Heart left ventricle (tissue), 16 donors: ENCODE measurements at regions of chr2 and their contacts with region 1.

Region 1: DNA sequence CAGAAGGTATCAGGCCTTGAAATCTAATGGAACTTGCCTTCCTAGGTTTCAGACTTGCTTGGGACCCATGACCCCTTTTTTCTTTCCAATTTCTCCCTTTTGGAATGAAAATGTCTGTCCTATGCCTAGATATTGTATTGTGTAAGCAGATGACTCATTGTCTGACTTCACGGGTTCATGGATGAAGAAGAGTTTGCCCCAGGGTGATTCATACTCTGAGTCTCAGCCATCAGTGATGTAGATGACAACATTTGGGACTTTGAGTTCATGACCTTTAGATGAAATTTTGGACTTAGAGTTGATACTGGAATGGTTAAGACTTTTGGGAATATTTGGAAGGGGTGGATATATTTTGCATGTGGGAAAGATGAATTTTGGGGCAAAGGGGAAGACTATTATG is 11.2 kb upstream of the SCYGR5 start:
- DNase-seq: no peak
- ATAC-seq: peak in 3 of 4 donors; percentile 67 to 91 (median 85)
- H3K4me3 ChIP-seq: no peak overlapping the region
- H3K27ac ChIP-seq: peak overlapping the region in 2 of 12 donors; percentile 20 to 49
- H3K4me1 ChIP-seq: peaks cover 0 to 6% (median 0%) of the 10 kb centered on the region in 12 donors
- H3K27me3 ChIP-seq: no peaks in the 10 kb centered on the region
- CTCF ChIP-seq: no peak
- POLR2A ChIP-seq: no peak

Region 2: GRCh38 chr2:227460070-227460485 is 195.4 kb before region 1 on chr2:
- intact Hi-C with region 1: loop called in 2 of 10 experiments (anchors 10 kb)
- DNase-seq: no peak
- ATAC-seq: no peak
- H3K4me3 ChIP-seq: no peak overlapping the region
- H3K27ac ChIP-seq: no peak overlapping the region
- H3K4me1 ChIP-seq: peaks cover 0 to 20% (median 0%) of the 10 kb centered on the region in 12 donors
- H3K27me3 ChIP-seq: no peaks in the 10 kb centered on the region
- CTCF ChIP-seq: no peak
- POLR2A ChIP-seq: no peak

Region 3: DNA sequence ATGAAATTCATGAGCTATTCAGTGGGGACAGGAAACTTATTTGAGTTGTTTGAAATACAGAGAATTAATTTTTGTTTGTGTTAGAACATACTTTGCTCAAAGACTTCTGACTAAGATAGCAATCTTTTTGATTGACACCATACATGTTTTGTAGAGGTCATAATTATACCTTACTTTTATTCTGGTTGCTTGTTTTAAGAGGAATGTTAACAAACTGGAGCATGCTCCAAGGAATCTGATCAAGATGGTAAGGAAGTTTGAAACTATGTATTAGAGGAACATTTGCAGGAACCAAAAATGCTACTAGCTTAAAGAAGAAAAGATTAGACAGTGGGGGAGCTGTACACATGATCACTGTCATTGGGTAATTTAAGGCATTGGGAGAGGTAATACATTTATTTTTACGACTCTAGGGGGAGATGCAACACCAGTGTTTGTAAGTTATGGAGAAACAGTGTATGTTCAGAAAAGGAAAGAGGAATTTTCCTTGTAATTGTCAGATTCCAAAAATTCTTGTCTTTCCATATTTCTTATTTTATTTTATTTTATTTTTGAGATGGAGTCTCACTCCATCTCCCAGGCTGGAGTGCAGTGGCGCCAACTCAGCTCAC is 175.5 kb before region 1 on chr2:
- intact Hi-C with region 1: loop called in 2 of 10 experiments (anchors 5 to 10 kb)
- DNase-seq: no peak
- ATAC-seq: peak in 3 of 4 donors; percentile 46 to 76 (median 53)
- H3K4me3 ChIP-seq: no peak overlapping the region
- H3K27ac ChIP-seq: no peak overlapping the region
- H3K4me1 ChIP-seq: peaks cover 0 to 71% (median 25%) of the 10 kb centered on the region in 12 donors
- H3K27me3 ChIP-seq: no peaks in the 10 kb centered on the region
- CTCF ChIP-seq: peak in 10 of 12 donors; percentile 15 to 54 (median 42)
- POLR2A ChIP-seq: no peak

Region 4: DNA sequence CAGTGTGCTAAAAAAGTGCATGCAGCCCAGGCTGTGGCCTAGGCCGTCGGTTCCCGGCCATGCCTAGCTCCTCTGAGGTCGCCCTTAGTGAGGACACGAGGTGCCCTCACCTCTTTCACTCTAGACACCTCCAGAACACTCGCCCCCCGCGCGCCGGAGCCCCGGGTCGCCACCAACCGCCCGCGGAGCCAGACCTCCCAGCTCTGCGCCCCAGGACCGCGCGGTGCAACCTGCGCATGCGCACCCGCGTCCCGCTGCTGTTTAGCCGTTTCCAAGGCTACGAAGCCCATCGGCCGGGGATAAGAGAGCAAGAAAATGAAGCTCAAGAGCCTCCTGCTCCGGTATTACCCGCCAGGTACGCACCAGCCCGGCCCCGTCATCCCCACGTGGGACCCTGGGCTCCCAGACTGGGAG is 215.9 kb after region 1 on chr2 and contains the start of gene DAW1:
- intact Hi-C with region 1: no loop called
- DNase-seq: peak in 4 of 5 donors; percentile 38 to 81 (median 53)
- ATAC-seq: peak in 3 of 4 donors; percentile 65 to 82 (median 78)
- H3K4me3 ChIP-seq: peak within 1 kb of the TSS in 10 of 12 donors; percentile 20 to 54 (median 44)
- H3K27ac ChIP-seq: no peak within 1 kb of the TSS
- H3K4me1 ChIP-seq: peaks cover 0 to 9% (median 0%) of the 10 kb centered on the region in 12 donors
- H3K27me3 ChIP-seq: peaks cover 0 to 29% (median 0%) of the 10 kb centered on the region in 9 donors
- CTCF ChIP-seq: no peak
- POLR2A ChIP-seq: no peak
- total RNA-seq, gene DAW1: 0.20 to 1.3 (median 0.46) TPM in 4 of 9 donors, not detected in the others

Region 5: GRCh38 chr2:227884511-227884947 is 229.1 kb after region 1 on chr2:
- intact Hi-C with region 1: loop called in 1 of 10 experiments (anchors 10 kb)
- DNase-seq: peak; percentile 30 to 77 (median 48)
- ATAC-seq: peak in 3 of 4 donors; percentile 66 to 80 (median 70)
- H3K4me3 ChIP-seq: no peak overlapping the region
- H3K27ac ChIP-seq: no peak overlapping the region
- H3K4me1 ChIP-seq: no peaks in the 10 kb centered on the region
- H3K27me3 ChIP-seq: no peaks in the 10 kb centered on the region
- CTCF ChIP-seq: peak; percentile 44 to 72 (median 62)
- POLR2A ChIP-seq: no peak